Natural killer cell (primary cell): ENCODE measurements at regions of chr20 and their contacts with region 1.

Region 1: GRCh38 chr20:48904365-48905296 is 16.9 kb upstream of the ARFGEF2 start:
- DNase-seq: peak; percentile 60 to 82
- ATAC-seq: peak; percentile 67 to 79 (median 72)
- H3K4me3 ChIP-seq: no peak overlapping the region
- H3K4me3 Mint-ChIP-seq: no peak overlapping the region
- H3K27ac ChIP-seq: no peak overlapping the region
- H3K27ac Mint-ChIP-seq: peak overlapping the region in 1 of 2 donors; percentile 65
- H3K4me1 ChIP-seq: peaks cover 19% of the 10 kb centered on the region
- H3K4me1 Mint-ChIP-seq: peaks cover 30 to 42% of the 10 kb centered on the region in 2 donors
- H3K27me3 ChIP-seq: no peaks in the 10 kb centered on the region
- H3K27me3 Mint-ChIP-seq: no peaks in the 10 kb centered on the region
- CTCF ChIP-seq: peak; percentile 87

Region 2: DNA sequence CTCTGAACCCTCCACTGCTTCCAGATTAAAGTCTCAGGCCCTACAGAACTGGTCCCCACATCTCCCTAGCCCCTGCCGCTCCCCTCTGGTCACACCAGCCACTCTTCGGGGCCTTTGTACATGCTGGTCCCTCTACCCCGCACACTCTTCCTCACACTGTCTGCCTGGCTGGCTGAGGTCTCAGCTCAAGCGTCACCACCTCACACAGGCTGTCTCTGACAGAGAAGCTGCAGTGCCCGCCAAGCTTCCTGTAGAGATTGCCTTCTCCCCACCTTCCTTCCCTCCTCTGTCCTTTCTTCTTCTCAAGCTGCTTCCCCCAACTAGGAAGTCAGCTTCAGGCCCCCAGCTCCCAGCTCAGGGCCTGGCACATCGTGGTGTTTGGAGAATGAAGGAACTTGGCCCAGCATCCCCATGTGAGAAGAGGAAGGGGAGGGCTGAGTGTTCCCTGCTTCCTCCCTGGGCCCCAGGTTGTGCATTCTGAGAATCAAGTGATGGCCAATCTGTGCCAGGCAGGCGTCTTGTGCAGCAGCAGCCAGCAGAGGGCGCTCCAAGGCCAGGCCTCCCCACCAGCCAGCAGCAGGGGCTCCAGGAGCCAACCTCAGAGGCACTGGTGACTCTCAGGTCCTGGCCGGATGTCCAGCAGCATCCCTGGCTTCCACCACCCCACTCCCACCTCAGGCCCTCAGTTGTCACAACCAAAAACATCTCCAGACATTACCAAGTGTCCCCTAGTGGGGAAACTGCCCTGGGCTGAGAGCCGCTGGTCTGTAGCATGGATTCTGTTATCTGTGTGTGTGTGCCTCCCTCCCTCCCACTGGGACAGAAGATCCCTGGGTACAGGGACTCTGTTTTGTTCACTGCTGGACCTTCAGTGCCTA is 269.0 kb before region 1 on chr20:
- intact Hi-C with region 1: loop called (anchors 5 kb)
- DNase-seq: peak; percentile 68 to 71
- ATAC-seq: peak; percentile 57 to 70 (median 67)
- H3K4me3 ChIP-seq: no peak overlapping the region
- H3K4me3 Mint-ChIP-seq: no peak overlapping the region
- H3K27ac ChIP-seq: no peak overlapping the region
- H3K27ac Mint-ChIP-seq: peak overlapping the region; percentile 82 to 83
- H3K4me1 ChIP-seq: peaks cover 20% of the 10 kb centered on the region
- H3K4me1 Mint-ChIP-seq: peaks cover 35 to 53% of the 10 kb centered on the region in 2 donors
- H3K27me3 ChIP-seq: no peaks in the 10 kb centered on the region
- H3K27me3 Mint-ChIP-seq: no peaks in the 10 kb centered on the region
- CTCF ChIP-seq: peak; percentile 88

Region 3: GRCh38 chr20:48657475-48658470 is 246.9 kb before region 1 on chr20:
- intact Hi-C with region 1: loop called (anchors 1 kb)
- DNase-seq: peak; percentile 61 to 89
- ATAC-seq: peak; percentile 89 to 97 (median 90)
- H3K4me3 ChIP-seq: no peak overlapping the region
- H3K4me3 Mint-ChIP-seq: peak overlapping the region; percentile 22
- H3K27ac ChIP-seq: no peak overlapping the region
- H3K27ac Mint-ChIP-seq: peak overlapping the region; percentile 79 to 83
- H3K4me1 ChIP-seq: peaks cover 18% of the 10 kb centered on the region
- H3K4me1 Mint-ChIP-seq: peaks cover 44 to 59% of the 10 kb centered on the region in 2 donors
- H3K27me3 ChIP-seq: no peaks in the 10 kb centered on the region
- H3K27me3 Mint-ChIP-seq: no peaks in the 10 kb centered on the region
- CTCF ChIP-seq: peak; percentile 95